ENCODE measurements at regions of chr22 and their contacts with region 1.

Region 1: GRCh38 chr22:30485362-30485988 is 13.7 kb upstream of the SEC14L3 start:
- DNase-seq: peak; percentile 60 to 81 (median 72)
- H3K4me3 ChIP-seq: no peak overlapping the region
- H3K27ac ChIP-seq: no peak overlapping the region
- H3K4me1 ChIP-seq: no peaks in the 10 kb centered on the region
- H3K27me3 ChIP-seq: no peaks in the 10 kb centered on the region
- CTCF ChIP-seq: peak; percentile 93 to 99 (median 95)
- POLR2A ChIP-seq: no peak

Region 2: GRCh38 chr22:30262917-30263741 is 222.3 kb before region 1 on chr22:
- intact Hi-C with region 1: loop called in 1 of 2 experiments (anchors 5 kb)
- DNase-seq: peak; percentile 63 to 83 (median 77)
- H3K4me3 ChIP-seq: peak overlapping the region in 1 of 4 donors; percentile 30
- H3K27ac ChIP-seq: no peak overlapping the region
- H3K4me1 ChIP-seq: peaks cover 0 to 9% of the 10 kb centered on the region in 2 donors
- H3K27me3 ChIP-seq: no peaks in the 10 kb centered on the region
- CTCF ChIP-seq: peak; percentile 92 to 100 (median 98)
- POLR2A ChIP-seq: no peak

Region 3: GRCh38 chr22:30444632-30445437 is 40.6 kb before region 1 on chr22:
- intact Hi-C with region 1: loop called in 1 of 2 experiments (anchors 5 kb)
- DNase-seq: peak in 6 of 7 donors; percentile 39 to 76 (median 56)
- H3K4me3 ChIP-seq: no peak overlapping the region
- H3K27ac ChIP-seq: peak overlapping the region in 2 of 5 donors; percentile 69 to 76
- H3K4me1 ChIP-seq: peaks cover 9 to 13% of the 10 kb centered on the region in 2 donors
- H3K27me3 ChIP-seq: no peaks in the 10 kb centered on the region
- CTCF ChIP-seq: peak; percentile 57 to 74 (median 70)
- POLR2A ChIP-seq: no peak